ENCODE measurements at regions of chr9 and their contacts with region 1.

Region 1: GRCh38 chr9:69035438-69036308 is at the start of gene FXN:
- DNase-seq: peak; percentile 55 to 90 (median 72)
- H3K4me3 ChIP-seq: peak within 1 kb of the TSS; percentile 47 to 90 (median 78)
- H3K27ac ChIP-seq: peak within 1 kb of the TSS in 51 of 59 donors; percentile 15 to 88 (median 76)
- H3K27me3 ChIP-seq: no peaks in the 10 kb centered on the region
- CTCF ChIP-seq: peak; percentile 82 to 100 (median 97)
- total RNA-seq, gene FXN: 4.6 to 19.4 (median 12.3) TPM

Region 2: DNA sequence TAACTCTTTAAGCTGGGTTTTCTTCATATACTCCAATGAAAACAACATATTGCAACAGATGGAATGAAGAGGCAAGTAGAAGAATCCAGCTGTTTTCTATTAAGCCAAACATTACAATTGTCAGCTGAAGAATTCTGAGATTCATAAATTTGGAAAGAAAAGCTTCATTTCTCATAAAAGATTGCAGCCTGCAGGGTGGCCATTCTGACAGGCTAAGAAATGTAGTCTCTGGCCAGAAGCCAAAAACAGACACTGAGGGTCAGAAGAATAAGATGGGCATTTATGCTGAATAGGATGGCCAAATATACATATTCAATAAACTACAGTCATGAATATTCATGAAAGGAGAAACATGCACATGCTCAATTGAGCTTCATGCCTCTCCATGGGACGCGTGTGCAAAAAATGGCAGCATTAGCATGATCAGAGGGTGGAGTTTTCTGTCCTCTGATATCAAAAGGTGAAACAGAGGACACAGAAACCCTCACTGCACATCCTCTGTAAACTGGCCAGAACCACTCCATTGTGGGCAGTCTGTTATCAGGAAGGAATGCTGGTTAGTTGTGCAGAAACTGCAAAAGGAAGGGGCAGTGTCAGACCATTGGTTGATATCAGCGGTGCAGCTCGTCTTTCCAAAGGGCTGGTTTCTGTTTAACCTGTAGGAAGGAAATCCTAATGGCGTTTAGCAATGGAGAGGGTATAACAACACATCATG is 50.1 kb after region 1 on chr9:
- intact Hi-C with region 1: no loop called
- DNase-seq: no peak
- H3K4me3 ChIP-seq: no peak overlapping the region
- H3K27ac ChIP-seq: no peak overlapping the region
- H3K27me3 ChIP-seq: no peaks in the 10 kb centered on the region
- CTCF ChIP-seq: no peak

Region 3: DNA sequence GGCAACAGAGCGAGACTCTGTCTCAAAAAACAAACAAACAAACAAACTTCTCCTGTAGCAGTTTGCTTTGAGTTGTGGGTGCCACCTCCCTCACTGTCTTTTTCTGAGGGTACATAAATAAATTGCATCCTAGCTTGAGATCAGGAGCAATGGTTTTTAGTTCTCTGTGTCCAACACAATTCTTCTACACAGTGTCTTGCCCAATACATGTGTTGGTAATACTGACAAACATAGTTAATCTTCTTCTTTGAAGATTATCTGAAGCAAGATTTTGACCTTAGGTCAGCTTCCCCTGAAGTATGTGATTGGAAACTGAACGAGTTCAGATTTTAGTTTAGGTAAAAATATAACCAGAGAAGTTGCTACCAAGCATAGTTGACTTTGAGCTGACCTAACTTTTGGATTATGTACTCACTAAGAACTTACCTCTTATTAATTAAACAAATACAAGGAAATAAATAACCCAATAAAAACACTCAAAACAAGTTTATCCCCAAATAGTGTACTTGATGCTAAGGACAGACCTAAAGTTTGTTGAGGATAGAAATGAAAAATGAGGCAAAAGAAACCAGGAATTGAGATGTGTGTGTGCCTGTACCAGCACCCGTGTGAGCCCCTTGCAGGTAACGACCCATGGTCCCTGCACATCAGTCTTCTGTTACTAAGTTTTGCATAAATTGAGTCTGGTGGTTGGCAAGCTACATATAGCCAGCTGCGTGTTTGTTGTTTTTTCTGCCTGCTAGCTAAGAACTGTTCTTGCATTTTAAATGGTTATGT is 154.6 kb after region 1 on chr9:
- intact Hi-C with region 1: loop called (anchors 5 kb)
- DNase-seq: no peak
- H3K4me3 ChIP-seq: no peak overlapping the region
- H3K27ac ChIP-seq: peak overlapping the region in 55 of 59 donors; percentile 6 to 99 (median 71)
- H3K27me3 ChIP-seq: no peaks in the 10 kb centered on the region
- CTCF ChIP-seq: no peak

Region 4: DNA sequence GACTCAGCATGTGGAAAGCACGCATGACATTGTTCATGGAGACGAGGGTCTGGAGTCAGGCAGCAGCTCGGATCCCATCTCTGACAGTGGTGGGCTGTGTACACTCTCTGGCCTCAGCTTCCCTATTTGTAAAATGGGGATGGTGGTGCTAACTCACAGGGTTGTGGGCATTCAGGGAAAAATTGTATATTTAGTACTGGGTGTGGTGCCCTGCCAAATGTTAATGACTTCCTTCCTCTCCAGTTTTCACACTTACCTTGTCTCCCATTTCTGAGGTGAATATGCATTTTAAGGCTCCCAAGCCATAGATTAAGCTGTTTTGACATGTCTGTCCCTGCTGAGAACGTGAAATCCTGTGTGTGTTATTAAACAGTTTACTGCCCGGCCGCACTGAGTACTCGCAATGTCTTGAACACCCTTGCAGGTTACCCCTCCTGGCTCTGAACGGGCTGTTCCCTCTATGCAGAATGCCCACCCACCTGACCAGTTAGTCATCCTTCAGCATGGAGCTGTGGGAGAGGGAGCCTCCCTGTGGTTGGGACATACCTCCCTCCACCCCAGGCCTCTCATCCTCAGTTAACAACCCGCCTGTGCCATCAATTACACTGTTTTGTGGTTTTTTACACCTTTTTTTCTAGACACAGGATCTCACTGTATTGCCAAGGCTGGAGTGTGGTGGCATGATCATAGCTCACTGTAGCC is 164.2 kb after region 1 on chr9:
- intact Hi-C with region 1: loop called in 1 of 2 experiments (anchors 5 kb)
- DNase-seq: peak in 1 of 10 donors; percentile 47
- H3K4me3 ChIP-seq: no peak overlapping the region
- H3K27ac ChIP-seq: peak overlapping the region in 21 of 59 donors; percentile 15 to 99 (median 81)
- H3K27me3 ChIP-seq: no peaks in the 10 kb centered on the region
- CTCF ChIP-seq: peak in 1 of 56 donors; percentile 36

Region 5: DNA sequence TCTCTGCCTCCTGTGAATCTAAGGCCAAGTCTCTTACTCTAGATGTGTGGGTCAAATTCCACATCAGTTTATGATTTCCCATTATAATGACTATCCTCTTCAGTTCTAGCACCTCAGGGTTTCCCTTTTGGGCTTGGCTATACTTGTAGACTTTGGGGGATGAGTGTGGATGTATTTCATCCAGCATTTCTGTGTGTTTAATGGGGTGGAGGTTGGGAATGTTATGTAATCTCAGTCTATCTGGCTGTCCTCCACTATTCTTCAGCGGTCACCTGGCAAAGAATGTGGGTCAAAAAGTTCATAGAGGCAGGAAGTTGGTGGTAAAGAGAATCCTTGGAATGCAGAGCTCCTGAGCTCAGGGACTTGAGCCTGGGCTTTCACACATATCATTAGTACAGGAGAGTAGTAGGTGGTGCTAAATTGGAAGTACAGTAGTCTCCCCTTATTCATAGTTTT is 849.8 kb after region 1 on chr9:
- intact Hi-C with region 1: loop called in 1 of 2 experiments (anchors 10 kb)
- DNase-seq: no peak
- H3K4me3 ChIP-seq: peak overlapping the region in 6 of 59 donors; percentile 5 to 41 (median 19)
- H3K27ac ChIP-seq: peak overlapping the region in 6 of 59 donors; percentile 2 to 79 (median 48)
- H3K27me3 ChIP-seq: no peaks in the 10 kb centered on the region
- CTCF ChIP-seq: no peak